KBM-7 (cell line): ENCODE measurements at regions of chr1 and their contacts with region 1.

Region 1: DNA sequence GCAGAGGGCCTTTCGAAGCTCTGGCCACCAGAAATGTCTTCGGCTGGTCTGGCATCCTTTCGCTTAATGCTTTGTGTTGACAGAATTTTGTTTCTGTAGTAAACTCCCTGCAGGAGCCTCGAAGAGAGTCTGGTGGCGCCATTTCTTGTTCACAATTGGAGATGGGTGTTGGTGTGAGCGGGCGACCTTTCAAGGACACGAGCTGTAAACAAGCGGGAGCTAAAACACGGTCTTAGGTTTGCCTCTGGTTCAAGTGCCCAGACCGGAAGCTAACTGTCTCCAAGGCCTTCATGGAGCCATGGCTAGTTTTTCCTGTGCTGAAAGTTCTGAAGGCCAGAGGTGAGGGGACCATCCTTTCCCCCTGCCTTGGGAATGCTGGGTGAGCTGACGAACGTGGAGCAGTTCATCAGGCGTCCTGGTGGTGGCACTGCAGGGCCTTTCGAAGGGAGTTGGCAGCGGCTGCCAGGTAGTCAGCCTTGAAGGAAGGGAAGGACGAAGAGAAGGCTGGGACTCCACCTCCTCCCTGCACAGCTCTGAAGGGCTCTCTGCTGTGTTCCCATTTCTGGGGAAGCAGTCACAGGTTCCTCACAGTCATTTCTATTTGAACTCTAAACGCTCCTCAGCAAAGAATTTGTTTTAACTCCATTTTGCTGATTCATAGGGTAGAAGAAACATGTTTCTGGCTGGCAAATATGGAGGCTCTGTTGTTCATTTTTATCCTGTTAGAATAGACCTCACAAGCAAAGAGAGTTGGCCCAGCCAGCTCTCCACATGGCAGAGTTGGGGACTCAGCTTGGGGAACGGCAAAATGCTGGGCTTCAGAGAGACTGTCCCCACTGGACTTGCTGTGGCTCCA is 35.2 kb downstream of the URB2 start:
- DNase-seq: peak; percentile 81

Region 2: DNA sequence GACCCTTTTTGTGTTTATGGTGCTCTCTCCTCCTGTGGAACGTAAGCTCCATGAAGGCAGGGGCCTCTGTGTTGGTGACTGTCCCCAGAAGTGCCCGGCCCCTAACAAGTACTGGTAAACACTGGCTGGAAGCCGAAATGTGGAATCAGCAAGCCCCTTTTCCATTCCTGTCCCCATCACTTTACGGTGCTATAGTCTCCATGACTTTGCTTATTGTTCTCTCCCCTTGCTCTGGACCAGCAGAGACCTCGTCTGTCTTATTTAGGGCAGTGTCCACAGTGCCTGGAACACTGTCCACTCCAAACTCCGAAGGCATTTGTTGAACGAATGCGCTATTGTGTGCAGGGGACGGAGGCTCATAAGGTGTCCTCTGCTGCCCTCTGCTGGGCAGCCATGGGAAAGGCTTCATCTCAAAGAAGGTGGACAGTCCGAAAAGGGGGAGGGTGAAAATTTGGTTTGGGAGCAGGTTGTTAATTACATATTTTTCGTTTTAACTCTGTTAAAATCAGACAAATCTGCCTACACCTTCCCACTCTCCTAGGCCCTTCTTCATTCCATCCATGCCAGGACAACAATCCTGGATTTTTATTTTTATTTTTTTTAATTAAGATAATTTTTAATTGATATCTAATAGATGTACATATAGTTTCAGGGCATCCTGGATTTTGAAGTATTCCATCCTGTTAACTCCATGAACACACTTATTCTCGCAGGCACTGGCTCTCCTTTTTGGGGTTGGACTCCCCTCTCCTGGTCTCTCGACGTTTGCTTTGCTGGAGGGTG is 649.3 kb after region 1 on chr1:
- in situ Hi-C with region 1: loop called (anchors 25 kb)
- DNase-seq: peak; percentile 74